ENCODE measurements at regions of chr5 and their contacts with region 1.

Region 1: DNA sequence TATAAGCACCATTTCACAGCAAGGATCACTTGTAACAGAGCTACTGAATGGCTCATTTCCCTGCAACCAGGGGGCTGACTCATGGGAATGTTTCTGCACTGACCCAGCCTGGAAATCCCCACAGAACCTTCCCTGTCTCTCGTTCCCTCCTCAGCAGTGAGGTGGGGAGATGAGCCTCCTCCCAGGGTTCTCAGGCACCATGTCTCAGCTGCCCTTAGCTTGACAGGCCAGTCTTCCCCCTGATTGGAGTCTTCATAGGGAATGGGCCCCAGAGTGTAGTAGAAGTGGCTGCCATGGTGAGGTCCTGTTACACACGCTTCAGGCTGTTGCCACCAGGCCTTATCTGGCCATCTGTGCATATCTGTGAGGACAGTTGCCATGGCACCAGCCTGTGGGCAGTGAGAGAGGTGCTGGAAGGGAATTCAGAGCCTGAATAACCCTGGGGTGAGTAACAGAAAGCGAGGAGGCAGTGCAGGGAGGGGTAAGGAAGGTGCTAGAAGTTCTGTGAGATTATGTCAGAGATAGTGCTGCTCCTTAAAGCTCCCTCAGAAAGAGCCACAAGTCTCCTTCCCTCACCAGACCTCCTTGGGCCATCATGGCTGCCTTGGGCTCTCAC is 324.4 kb downstream of the ENC1 start:
- DNase-seq: no peak
- H3K4me3 ChIP-seq: no peak overlapping the region
- H3K27ac ChIP-seq: no peak overlapping the region
- H3K4me1 ChIP-seq: peaks cover 2% of the 10 kb centered on the region
- H3K27me3 ChIP-seq: no peaks in the 10 kb centered on the region
- CTCF ChIP-seq: no peak
- EP300 ChIP-seq: no peak
- POLR2A ChIP-seq: no peak

Region 2: DNA sequence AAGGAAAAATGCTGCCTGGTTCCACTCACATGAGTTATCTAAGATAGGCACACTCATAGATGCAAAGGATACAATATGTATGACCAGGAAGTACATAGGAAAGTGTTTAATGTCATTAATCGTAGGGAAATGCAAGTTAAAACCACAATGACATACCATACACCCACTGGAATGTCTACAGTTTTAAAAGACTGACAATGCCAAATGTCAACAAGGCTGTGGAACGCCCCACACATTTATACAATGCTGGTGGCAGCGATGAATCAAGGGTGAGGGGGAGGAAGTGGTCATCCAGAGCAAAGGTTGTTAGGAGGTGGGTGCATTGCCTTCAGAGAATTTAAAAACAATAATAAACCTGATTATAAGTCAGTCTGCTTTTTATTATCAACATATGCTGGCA is 252.4 kb before region 1 on chr5:
- intact Hi-C with region 1: no loop called
- DNase-seq: no peak
- H3K4me3 ChIP-seq: no peak overlapping the region
- H3K27ac ChIP-seq: no peak overlapping the region
- H3K4me1 ChIP-seq: peaks cover 15% of the 10 kb centered on the region
- H3K27me3 ChIP-seq: no peaks in the 10 kb centered on the region
- CTCF ChIP-seq: no peak
- EP300 ChIP-seq: no peak
- POLR2A ChIP-seq: no peak

Region 3: GRCh38 chr5:74357827-74358226 is 41.7 kb after region 1 on chr5:
- intact Hi-C with region 1: no loop called
- DNase-seq: no peak
- H3K4me3 ChIP-seq: no peak overlapping the region
- H3K27ac ChIP-seq: no peak overlapping the region
- H3K4me1 ChIP-seq: peaks cover 11% of the 10 kb centered on the region
- H3K27me3 ChIP-seq: no peaks in the 10 kb centered on the region
- CTCF ChIP-seq: no peak
- EP300 ChIP-seq: no peak
- POLR2A ChIP-seq: no peak

Region 4: DNA sequence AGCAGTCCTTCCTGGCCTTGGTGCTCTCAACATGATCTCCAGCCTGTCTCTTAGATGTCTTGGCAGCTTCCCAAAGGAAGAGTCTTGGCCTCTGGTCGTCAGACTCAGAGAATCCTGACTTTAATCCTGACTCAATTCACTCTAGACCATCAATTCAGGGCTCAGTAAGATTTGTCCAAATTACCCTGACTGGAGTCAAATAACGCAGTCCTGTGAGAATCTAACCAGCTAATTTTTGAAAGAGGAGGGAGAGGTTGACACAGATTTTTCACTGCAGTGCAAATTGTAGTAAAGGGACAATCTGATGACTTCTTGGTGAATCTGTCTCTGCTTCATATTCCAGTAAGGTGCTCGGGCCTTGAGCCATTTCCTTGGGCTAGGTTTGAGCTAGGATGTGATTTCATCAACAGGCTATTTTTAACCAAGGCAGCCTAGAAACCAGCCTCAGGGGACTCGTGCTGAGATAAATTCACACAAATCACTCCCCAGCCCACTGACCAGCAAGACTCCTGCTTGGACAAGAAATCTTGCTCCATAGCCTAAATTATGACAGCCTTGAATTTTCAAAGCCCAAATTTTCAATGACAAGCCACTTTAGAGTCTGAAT is 66.9 kb after region 1 on chr5:
- intact Hi-C with region 1: loop called in 1 of 4 experiments (anchors 5 kb)
- DNase-seq: peak in 3 of 5 donors; percentile 13 to 63 (median 41)
- H3K4me3 ChIP-seq: no peak overlapping the region
- H3K27ac ChIP-seq: peak overlapping the region in 1 of 2 donors; percentile 23
- H3K4me1 ChIP-seq: peaks cover 11% of the 10 kb centered on the region
- H3K27me3 ChIP-seq: no peaks in the 10 kb centered on the region
- CTCF ChIP-seq: no peak
- EP300 ChIP-seq: no peak
- POLR2A ChIP-seq: no peak

Region 5: GRCh38 chr5:74673011-74673790 is 357.0 kb after region 1 on chr5:
- intact Hi-C with region 1: no loop called
- DNase-seq: no peak
- H3K4me3 ChIP-seq: peak overlapping the region; percentile 5
- H3K27ac ChIP-seq: no peak overlapping the region
- H3K4me1 ChIP-seq: no peaks in the 10 kb centered on the region
- H3K27me3 ChIP-seq: no peaks in the 10 kb centered on the region
- CTCF ChIP-seq: peak in 2 of 3 donors; percentile 12 to 44
- EP300 ChIP-seq: no peak
- POLR2A ChIP-seq: no peak